A673 (cell line): ENCODE measurements at regions of chr11 and their contacts with region 1.

Region 1: GRCh38 chr11:102047305-102047924 is at the start of gene CFAP300:
- DNase-seq: peak; percentile 97
- H3K4me3 ChIP-seq: peak within 1 kb of the TSS; percentile 69
- H3K27ac ChIP-seq: peak within 1 kb of the TSS; percentile 59
- H3K4me1 ChIP-seq: peaks cover 18% of the 10 kb centered on the region
- H3K27me3 ChIP-seq: no peaks in the 10 kb centered on the region
- CTCF ChIP-seq: no peak
- total RNA-seq, gene CFAP300: 10.9 and 11.3 TPM in 2 replicates

Region 2: DNA sequence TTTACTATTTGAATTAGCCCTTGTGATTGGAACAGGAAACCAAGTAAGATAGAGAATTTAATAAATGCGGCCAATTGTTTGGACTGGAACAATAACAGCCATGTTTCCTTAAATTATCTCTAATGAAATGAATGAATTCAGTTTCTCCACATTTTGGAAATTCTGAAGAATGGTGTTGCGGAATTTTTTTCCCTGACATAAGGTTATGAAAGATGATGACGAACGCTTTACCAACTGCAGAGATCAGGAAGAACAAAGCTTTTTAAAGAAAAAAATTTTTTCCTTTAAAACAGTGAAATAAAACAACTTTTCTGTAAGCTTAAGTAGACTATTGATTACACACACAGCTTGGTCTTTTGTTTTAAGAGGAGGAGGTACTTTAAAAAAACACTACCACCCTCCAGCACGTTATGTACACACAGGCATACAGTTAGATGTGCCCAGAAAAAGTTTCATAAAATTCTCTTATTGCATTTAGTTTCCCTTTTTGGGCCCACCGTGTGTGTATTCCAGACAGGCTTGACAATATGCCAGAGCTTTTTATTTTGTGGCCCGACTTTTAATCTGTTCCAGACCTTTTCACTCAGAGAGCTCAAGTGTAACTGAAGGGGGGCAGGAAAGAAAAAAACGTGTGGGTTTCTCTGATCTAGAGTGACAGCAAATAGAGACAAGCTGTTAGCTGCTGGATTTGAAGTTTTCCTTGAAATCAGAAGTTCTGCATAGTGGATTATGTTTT is 140.2 kb after region 1 on chr11:
- CTCF ChIA-PET with region 1: no interaction called
- POLR2A ChIA-PET with region 1: interaction called, 32 read pairs
- intact Hi-C with region 1: no loop called
- DNase-seq: peak; percentile 91
- H3K4me3 ChIP-seq: peak overlapping the region; percentile 21
- H3K27ac ChIP-seq: peak overlapping the region; percentile 77
- H3K4me1 ChIP-seq: peaks cover 49% of the 10 kb centered on the region
- H3K27me3 ChIP-seq: no peaks in the 10 kb centered on the region
- CTCF ChIP-seq: no peak

Region 3: GRCh38 chr11:102390667-102391465 is 343.5 kb after region 1 on chr11:
- CTCF ChIA-PET with region 1: no interaction called
- POLR2A ChIA-PET with region 1: no interaction called
- intact Hi-C with region 1: no loop called
- DNase-seq: peak; percentile 73
- H3K4me3 ChIP-seq: no peak overlapping the region
- H3K27ac ChIP-seq: no peak overlapping the region
- H3K4me1 ChIP-seq: no peaks in the 10 kb centered on the region
- H3K27me3 ChIP-seq: no peaks in the 10 kb centered on the region
- CTCF ChIP-seq: peak; percentile 96